Colonic mucosa (tissue), 4 donors: ENCODE measurements at regions of chr12 and their contacts with region 1.

Region 1: DNA sequence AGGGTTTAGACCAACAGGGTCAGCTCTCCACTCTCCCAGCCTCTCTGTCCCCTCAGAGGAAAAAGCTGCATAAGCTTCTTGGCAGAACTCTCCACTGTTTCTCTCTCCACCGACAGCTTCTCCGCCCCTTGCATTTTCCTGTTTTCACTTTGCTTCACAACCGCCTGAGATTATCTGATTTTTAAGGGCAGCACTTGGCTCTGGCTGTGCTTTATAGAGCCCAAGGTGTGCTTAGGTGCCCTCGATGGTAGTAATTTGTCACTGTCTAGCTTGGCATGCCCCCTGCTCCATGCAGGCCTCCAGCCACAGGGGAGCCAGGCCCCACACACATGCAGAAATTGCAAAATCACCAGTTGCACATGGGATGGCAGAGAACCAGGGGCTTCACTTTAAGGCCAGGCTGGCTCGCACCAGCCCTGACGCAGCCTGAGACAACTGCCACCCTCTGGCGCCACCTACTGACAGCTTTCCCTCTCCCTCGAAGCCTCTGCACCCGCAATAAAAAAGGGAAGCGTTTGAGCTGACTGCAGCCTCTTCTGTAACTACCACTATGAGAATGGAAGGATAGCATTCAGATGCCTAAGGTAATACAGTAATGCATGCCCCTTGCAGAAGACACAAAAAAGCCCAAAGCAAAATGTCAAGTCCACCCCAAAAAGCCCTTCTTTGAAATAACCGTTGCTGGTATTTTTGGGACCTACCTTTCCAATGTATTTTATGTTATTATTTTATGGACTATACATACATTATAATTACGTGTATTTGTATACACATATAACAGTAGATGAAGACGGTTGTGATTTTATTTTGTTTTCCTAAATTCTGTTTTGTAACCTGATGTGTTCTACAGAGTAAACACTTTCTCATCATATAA is 32.0 kb upstream of the RIMBP2 start:
- DNase-seq: peak; percentile 85
- H3K4me3 ChIP-seq: no peak overlapping the region
- H3K27ac ChIP-seq: no peak overlapping the region
- H3K4me1 ChIP-seq: no peaks in the 10 kb centered on the region
- H3K27me3 ChIP-seq: no peaks in the 10 kb centered on the region
- CTCF ChIP-seq: peak; percentile 82

Region 2: DNA sequence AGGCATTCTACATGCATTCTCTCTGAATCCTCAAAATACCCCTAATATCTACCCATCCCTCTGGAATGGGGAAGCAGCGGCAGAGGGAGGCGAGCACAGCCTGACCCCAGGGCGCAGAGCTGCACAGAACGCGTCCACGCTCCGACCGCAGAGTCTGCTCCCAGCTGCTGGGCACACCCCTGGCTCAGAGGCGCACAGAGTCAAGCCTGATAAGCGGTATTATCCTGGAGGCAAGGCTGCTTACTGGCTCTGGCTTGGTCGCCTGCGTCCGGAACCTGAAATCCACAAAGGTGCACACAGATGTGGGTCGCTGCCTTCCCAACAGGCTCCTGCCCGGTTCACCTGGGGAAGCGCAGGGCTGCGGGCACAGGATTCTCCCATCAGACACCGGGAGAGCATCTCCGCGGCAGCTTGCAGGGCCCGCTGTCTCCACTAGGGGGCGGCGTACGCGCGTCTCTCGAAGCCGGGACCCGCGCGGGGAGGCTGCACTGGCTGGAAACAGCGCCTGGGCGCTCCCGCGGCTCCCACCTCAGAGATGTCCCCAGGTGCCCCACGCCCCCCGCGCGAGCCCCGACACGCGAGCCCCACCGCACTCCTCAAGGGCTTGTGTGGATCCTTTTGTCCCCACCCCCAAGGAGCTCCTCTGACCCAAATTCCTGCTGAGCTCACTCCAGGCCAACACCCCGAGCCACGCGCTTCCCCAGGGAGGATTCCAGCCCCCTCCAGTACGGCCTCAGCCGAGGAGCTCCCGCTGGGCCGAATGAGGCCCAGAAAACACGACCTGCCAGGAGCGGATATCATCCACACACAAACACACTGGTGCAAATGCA is 705.9 kb before region 1 on chr12:
- intact Hi-C with region 1: loop called (anchors 10 kb)
- DNase-seq: peak; percentile 24
- H3K4me3 ChIP-seq: no peak overlapping the region
- H3K27ac ChIP-seq: no peak overlapping the region
- H3K4me1 ChIP-seq: no peaks in the 10 kb centered on the region
- H3K27me3 ChIP-seq: peaks cover 14% of the 10 kb centered on the region
- CTCF ChIP-seq: peak; percentile 58

Region 3: GRCh38 chr12:130401703-130402102 is 346.4 kb before region 1 on chr12:
- intact Hi-C with region 1: loop called (anchors 2 kb)
- DNase-seq: no peak
- H3K4me3 ChIP-seq: no peak overlapping the region
- H3K27ac ChIP-seq: no peak overlapping the region
- H3K4me1 ChIP-seq: no peaks in the 10 kb centered on the region
- H3K27me3 ChIP-seq: no peaks in the 10 kb centered on the region
- CTCF ChIP-seq: no peak

Region 4: GRCh38 chr12:130633776-130634175 is 114.3 kb before region 1 on chr12:
- intact Hi-C with region 1: no loop called
- DNase-seq: peak; percentile 27
- H3K4me3 ChIP-seq: no peak overlapping the region
- H3K27ac ChIP-seq: no peak overlapping the region
- H3K4me1 ChIP-seq: no peaks in the 10 kb centered on the region
- H3K27me3 ChIP-seq: no peaks in the 10 kb centered on the region
- CTCF ChIP-seq: no peak

Region 5: DNA sequence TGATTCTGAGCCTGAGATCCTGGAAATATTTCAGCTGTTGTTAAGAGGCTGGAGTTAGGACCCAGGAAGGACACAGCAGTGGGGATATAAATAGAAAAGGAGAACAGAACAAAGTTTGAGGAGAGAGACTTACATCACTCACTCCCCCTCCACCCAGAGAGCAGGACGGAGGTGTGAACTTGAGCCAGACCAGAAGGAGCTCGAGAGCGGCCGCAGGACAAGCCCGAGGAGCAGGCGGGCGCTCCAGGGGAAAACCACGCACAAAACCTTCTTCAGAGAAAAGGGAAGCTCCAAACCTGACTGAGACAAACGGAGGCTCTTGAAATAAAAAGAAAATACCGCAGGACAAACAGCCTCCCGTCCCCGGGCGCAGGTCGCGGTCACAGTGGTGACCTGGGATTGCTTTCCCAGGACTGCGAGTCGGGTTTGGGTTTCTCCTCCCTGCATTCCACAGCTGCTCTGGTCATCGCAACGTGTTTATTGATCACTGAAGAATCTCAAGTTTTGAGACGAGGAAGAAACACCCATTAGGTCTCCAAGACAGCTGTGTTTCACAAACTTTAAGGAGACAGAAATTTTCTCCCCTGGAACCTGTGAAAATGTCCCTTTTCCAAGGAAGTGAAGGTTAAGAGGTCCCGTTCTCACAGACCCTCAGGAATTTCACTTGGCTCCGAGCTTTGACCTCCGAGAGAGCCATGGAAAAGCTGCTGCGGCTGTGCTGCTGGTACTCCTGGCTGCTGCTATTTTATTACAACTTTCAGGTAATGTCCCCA is 205.9 kb after region 1 on chr12 and contains the start of gene ADGRD1:
- intact Hi-C with region 1: no loop called
- DNase-seq: peak; percentile 36
- H3K4me3 ChIP-seq: peak within 1 kb of the TSS; percentile 13
- H3K27ac ChIP-seq: no peak within 1 kb of the TSS
- H3K4me1 ChIP-seq: no peaks in the 10 kb centered on the region
- H3K27me3 ChIP-seq: no peaks in the 10 kb centered on the region
- CTCF ChIP-seq: no peak
- total RNA-seq, gene ADGRD1: 3.5 to 3.6 TPM